Gastrocnemius medialis (tissue), 4 donors: ENCODE measurements at regions of chr9 and their contacts with region 1.

Region 1: DNA sequence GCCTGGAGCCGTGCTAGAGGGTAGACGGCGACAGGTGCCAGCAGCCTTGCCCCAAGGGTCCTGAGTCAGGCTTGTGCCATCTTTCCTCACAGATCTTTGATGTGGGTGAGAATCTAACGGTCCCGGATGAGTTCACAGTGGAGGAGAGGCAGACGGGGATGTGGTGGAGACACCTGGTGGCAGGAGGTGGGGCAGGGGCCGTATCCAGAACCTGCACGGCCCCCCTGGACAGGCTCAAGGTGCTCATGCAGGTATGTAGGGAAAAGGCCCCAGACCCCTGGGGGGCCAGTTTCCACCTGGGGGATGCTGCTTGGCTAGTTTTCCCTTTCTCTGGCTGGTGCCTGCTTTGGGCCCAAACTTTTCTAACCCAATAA is 24.0 kb downstream of the PTGES2 start:
- DNase-seq: peak in 1 of 2 donors; percentile 77
- ATAC-seq: peak; percentile 7
- H3K4me3 ChIP-seq: peak overlapping the region; percentile 20 to 38 (median 28)
- H3K27ac ChIP-seq: peak overlapping the region; percentile 91 to 99 (median 98)
- H3K4me1 ChIP-seq: peaks cover 81 to 89% of the 10 kb centered on the region in 2 donors
- H3K27me3 ChIP-seq: no peaks in the 10 kb centered on the region
- CTCF ChIP-seq: peak in 2 of 5 experiments; percentile 49 to 58
- POLR2A ChIP-seq: no peak

Region 2: DNA sequence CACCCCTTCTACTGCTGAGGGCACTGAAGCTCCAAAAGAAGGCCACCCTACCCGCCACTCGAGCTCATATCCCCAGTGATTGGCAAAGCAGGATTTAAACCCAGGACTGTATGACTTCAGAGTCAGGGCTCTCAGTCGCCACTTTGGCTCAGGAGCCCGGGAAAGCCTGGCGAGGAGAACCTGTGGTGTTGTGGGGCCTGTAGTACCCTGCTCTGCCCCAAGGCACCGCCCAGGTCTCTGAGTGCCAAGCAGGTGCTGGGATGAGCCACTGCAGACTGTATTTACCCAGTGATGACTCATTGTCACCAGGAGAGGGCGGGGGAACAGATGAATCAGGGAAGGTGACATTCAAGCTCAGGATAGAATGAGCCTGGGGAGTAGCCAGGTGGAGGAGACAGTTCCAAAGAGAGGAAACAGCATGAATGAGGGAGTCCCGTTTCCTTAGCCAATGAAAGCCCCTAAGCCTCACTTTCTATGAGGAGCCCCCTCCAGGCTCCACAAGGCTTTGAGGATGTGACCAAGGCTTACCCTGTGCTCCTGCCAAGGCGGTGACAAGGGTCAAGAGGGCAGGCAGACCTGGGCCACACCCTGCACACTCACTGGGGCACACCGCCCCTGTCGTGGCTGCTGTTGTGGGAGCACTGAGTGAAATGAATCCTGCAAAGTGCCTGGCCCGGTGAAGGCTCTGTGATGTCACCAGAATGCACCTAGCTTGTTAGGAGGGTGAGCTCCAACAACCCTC is 148.1 kb before region 1 on chr9:
- in situ Hi-C with region 1: loop called in 3 of 4 experiments (anchors 10 to 25 kb)
- intact Hi-C with region 1: loop called (anchors 5 kb)
- DNase-seq: peak; percentile 96 to 99
- ATAC-seq: peak; percentile 96 to 99
- H3K4me3 ChIP-seq: peak overlapping the region in 1 of 4 donors; percentile 29
- H3K27ac ChIP-seq: peak overlapping the region; percentile 83 to 92 (median 90)
- H3K4me1 ChIP-seq: peaks cover 16 to 26% of the 10 kb centered on the region in 2 donors
- H3K27me3 ChIP-seq: no peaks in the 10 kb centered on the region
- CTCF ChIP-seq: peak; percentile 53 to 79 (median 69)
- POLR2A ChIP-seq: peak in 1 of 2 donors; percentile 58

Region 3: GRCh38 chr9:128244837-128245231 is 141.3 kb after region 1 on chr9:
- in situ Hi-C with region 1: no loop called
- intact Hi-C with region 1: no loop called
- DNase-seq: peak; percentile 64 to 81
- ATAC-seq: peak; percentile 37 to 60
- H3K4me3 ChIP-seq: peak overlapping the region in 3 of 4 donors; percentile 22 to 42 (median 41)
- H3K27ac ChIP-seq: peak overlapping the region; percentile 59 to 70 (median 68)
- H3K4me1 ChIP-seq: no peaks in the 10 kb centered on the region
- H3K27me3 ChIP-seq: peaks cover 0 to 5% (median 3%) of the 10 kb centered on the region in 3 donors
- CTCF ChIP-seq: no peak
- POLR2A ChIP-seq: peak; percentile 13 to 37